Esophagus squamous epithelium (tissue), 5 donors: ENCODE measurements at regions of chr17 and their contacts with region 1.

Region 1: DNA sequence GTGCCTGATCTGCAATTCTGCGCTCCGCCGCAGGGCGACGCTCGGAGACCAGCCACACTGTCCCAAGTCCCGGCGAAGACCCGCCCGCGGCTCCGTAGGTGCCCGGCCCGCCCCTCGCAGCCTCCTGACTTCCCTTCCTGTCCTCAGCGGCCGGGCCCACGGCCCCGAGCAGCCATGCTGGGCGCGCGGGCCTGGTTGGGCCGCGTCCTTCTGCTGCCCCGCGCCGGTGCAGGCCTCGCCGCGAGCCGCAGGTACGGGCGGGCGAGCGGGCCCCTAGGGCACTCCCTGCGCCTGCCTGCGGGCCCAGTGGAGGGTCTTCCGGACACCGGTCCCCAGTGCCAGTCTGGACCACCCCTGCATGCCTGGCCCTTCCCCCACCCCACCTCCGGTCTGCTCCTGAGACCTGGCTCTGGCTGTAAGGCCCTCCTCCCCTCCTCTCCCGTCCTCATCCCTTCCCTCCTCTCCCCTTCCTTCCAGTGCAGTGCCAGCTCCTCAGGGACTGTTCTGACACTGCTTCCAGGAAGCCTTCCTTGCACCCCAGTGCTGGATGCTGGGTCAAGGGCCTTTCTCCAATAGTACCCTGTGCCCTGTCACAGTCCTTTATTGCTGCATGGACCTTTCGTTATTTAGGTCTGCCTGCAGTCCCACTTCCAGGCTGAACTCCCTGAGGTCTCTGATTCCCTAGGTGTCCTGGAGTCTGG is at the start of gene SPATA20:
- DNase-seq: peak; percentile 29
- H3K4me3 ChIP-seq: peak within 1 kb of the TSS; percentile 54 to 74 (median 62)
- H3K27ac ChIP-seq: peak within 1 kb of the TSS; percentile 81 to 90 (median 81)
- H3K4me1 ChIP-seq: peaks cover 25 to 64% (median 27%) of the 10 kb centered on the region in 3 donors
- H3K27me3 ChIP-seq: no peaks in the 10 kb centered on the region
- CTCF ChIP-seq: peak; percentile 97 to 99 (median 98)
- POLR2A ChIP-seq: peak in 3 of 4 donors; percentile 43 to 90 (median 64)
- total RNA-seq, gene SPATA20: 34.1 to 67.3 (median 38.1) TPM

Region 2: DNA sequence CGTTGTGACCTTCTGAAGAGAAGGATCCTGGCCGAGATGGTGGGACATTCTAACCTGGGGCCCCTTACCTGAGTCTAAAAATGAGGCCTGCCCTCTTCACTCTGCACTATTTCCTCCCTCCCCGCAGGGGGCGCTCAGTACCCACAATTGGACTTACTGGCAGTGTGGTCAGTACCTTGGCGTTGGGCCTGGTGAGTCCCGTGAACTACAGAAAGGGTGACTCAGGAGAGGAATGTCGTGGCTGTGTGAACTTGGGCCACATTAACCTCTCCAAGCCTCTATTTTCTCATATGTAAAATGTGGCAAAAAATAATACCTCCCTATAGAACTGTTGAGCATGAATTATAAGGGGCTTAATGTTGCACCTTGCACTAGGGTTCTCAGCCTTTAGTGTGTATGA is 64.7 kb before region 1 on chr17:
- intact Hi-C with region 1: loop called (anchors 5 kb)
- DNase-seq: peak; percentile 37
- H3K4me3 ChIP-seq: no peak overlapping the region
- H3K27ac ChIP-seq: peak overlapping the region; percentile 55 to 81 (median 67)
- H3K4me1 ChIP-seq: peaks cover 15 to 53% (median 18%) of the 10 kb centered on the region in 3 donors
- H3K27me3 ChIP-seq: no peaks in the 10 kb centered on the region
- CTCF ChIP-seq: peak; percentile 74 to 96 (median 90)
- POLR2A ChIP-seq: no peak

Region 3: DNA sequence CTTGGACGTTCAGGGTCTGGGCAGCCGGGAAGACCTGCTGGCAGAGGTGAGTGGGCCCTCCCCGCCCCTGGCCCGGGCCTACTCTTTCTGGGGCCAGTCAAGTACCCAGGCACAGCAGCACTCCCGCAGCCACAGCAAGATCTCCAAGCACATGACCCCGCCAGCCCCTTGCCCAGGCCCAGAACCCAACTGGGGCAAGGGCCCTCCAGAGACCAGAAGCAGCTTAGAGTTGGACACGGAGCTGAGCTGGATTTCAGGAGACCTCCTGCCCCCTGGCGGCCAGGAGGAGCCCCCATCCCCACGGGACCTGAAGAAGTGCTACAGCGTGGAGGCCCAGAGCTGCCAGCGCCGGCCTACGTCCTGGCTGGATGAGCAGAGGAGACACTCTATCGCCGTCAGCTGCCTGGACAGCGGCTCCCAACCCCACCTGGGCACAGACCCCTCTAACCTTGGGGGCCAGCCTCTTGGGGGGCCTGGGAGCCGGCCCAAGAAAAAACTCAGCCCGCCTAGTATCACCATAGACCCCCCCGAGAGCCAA is 78.9 kb after region 1 on chr17:
- intact Hi-C with region 1: loop called (anchors 2 kb)
- DNase-seq: no peak
- H3K4me3 ChIP-seq: no peak overlapping the region
- H3K27ac ChIP-seq: no peak overlapping the region
- H3K4me1 ChIP-seq: peaks cover 0 to 16% (median 0%) of the 10 kb centered on the region in 3 donors
- H3K27me3 ChIP-seq: peaks cover 0 to 73% (median 0%) of the 10 kb centered on the region in 4 donors
- CTCF ChIP-seq: peak; percentile 55 to 74 (median 64)
- POLR2A ChIP-seq: no peak

Region 4: GRCh38 chr17:50681263-50682210 is 134.4 kb after region 1 on chr17:
- intact Hi-C with region 1: loop called (anchors 5 kb)
- DNase-seq: no peak
- H3K4me3 ChIP-seq: no peak overlapping the region
- H3K27ac ChIP-seq: no peak overlapping the region
- H3K4me1 ChIP-seq: peaks cover 3 to 26% (median 10%) of the 10 kb centered on the region in 3 donors
- H3K27me3 ChIP-seq: no peaks in the 10 kb centered on the region
- CTCF ChIP-seq: peak in 5 of 6 experiments; percentile 38 to 69 (median 52)
- POLR2A ChIP-seq: no peak

Region 5: DNA sequence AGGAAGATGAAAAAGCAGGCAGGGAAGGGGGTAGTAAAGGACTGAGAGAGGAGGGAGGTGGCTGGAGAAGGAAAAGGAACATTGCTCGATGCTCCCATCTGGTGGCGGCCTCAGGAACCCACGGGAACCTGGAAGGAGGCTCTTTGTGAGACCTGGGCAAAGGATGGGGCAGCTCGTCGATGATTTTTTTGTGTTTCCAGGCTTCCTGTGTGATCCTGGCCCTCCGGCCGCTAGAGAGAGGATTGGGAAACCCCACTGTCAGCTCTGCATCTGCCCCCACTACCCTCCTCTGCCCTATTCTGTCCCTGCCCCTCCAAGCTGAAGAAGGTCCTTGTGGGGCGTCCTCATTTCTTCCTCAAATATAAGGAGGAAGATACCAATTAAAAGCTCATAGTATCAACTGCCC is 294.8 kb after region 1 on chr17:
- intact Hi-C with region 1: loop called (anchors 10 kb)
- DNase-seq: no peak
- H3K4me3 ChIP-seq: no peak overlapping the region
- H3K27ac ChIP-seq: no peak overlapping the region
- H3K4me1 ChIP-seq: peaks cover 0 to 22% (median 0%) of the 10 kb centered on the region in 3 donors
- H3K27me3 ChIP-seq: no peaks in the 10 kb centered on the region
- CTCF ChIP-seq: peak; percentile 64 to 89 (median 81)
- POLR2A ChIP-seq: no peak